ENCODE measurements at regions of chr1 and their contacts with region 1.

Region 1: DNA sequence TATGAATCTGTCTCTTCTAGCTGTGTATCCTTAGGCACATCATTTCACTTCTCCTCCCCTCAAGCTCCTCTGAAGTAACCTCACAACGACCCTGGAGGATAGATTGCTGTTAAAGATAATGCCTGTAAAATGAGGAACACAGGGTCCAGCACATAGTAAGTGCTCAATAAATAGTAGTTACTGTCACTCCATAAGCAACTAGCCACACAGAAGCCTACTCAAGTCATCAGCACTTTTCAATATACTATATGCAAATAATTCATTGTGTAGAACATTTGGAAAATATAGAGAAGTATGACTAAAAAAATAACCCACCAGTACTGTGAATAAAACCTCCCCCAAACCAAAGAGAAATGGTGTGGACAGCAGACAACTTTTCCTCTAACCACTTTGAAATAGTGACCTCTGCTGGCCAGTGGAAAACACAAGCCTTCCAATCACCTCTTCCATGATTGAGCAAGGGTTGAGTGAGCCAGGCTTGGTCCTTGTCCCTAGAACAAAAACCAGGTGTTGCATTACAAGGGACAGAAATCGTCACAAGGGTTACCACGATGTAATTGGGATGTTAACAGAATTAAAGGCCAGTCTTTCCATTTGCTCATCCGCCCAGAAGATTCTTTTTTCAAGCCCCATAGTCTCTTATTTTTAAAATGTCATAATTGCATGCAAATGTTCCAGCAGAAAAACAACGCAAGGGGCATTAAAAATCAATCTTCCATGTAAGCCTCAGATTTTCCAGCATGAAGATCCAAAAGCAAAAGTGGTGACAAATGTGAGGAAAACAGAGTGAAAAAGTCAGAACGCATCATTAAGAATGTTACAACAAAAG is 15.7 kb upstream of the GLIS1 start:
- DNase-seq: peak in 1 of 5 donors; percentile 11
- H3K4me3 ChIP-seq: no peak overlapping the region
- H3K4me3 Mint-ChIP-seq: no peak overlapping the region
- H3K27ac ChIP-seq: no peak overlapping the region
- H3K27ac Mint-ChIP-seq: no peak overlapping the region
- H3K4me1 ChIP-seq: no peaks in the 10 kb centered on the region
- H3K4me1 Mint-ChIP-seq: no peaks in the 10 kb centered on the region
- H3K27me3 ChIP-seq: no peaks in the 10 kb centered on the region
- H3K27me3 Mint-ChIP-seq: no peaks in the 10 kb centered on the region

Region 2: GRCh38 chr1:53442299-53442698 is 312.4 kb before region 1 on chr1:
- CTCF ChIA-PET with region 1: no interaction called
- POLR2A ChIA-PET with region 1: no interaction called
- intact Hi-C with region 1: loop called (anchors 5 kb)
- DNase-seq: no peak
- H3K4me3 ChIP-seq: no peak overlapping the region
- H3K4me3 Mint-ChIP-seq: no peak overlapping the region
- H3K27ac ChIP-seq: no peak overlapping the region
- H3K27ac Mint-ChIP-seq: peak overlapping the region in 2 of 7 donors; percentile 4 to 17
- H3K4me1 ChIP-seq: no peaks in the 10 kb centered on the region
- H3K4me1 Mint-ChIP-seq: peaks cover 0 to 2% (median 0%) of the 10 kb centered on the region in 4 donors
- H3K27me3 ChIP-seq: no peaks in the 10 kb centered on the region
- H3K27me3 Mint-ChIP-seq: no peaks in the 10 kb centered on the region

Region 3: DNA sequence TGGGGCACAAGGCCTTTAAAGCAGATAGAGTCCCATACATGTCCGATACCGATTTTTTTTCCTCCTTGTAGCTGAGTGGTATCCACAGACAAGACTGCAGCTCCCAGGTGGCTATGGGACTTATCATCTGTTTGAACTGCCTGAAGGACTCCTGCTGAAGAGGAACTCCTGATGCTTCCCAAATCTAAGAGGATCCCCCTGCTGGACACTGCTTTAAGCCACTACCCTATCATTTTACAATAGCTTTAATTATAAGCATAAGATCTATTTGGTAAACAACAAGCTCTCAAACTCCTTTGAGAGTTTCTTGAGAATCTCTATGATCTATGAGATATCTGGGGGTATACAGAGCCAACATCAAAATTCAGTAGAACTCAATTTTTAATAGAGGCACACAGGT is 71.7 kb after region 1 on chr1:
- CTCF ChIA-PET with region 1: no interaction called
- POLR2A ChIA-PET with region 1: no interaction called
- intact Hi-C with region 1: no loop called
- DNase-seq: no peak
- H3K4me3 ChIP-seq: no peak overlapping the region
- H3K4me3 Mint-ChIP-seq: no peak overlapping the region
- H3K27ac ChIP-seq: no peak overlapping the region
- H3K27ac Mint-ChIP-seq: peak overlapping the region in 1 of 7 donors; percentile 4
- H3K4me1 ChIP-seq: no peaks in the 10 kb centered on the region
- H3K4me1 Mint-ChIP-seq: peaks cover 0 to 2% (median 0%) of the 10 kb centered on the region in 4 donors
- H3K27me3 ChIP-seq: no peaks in the 10 kb centered on the region
- H3K27me3 Mint-ChIP-seq: no peaks in the 10 kb centered on the region

Measured in CD4-positive, alpha-beta memory T cell (primary cell).